Activated CD8-positive, alpha-beta T cell treated with anti-CD3 and anti-CD28 coated beads, Interleukin-2, amount 10 ng/mL, durations not matched to agents 7 days and 5 days (primary cell): ENCODE measurements at regions of chr11 and their contacts with region 1.

Region 1: DNA sequence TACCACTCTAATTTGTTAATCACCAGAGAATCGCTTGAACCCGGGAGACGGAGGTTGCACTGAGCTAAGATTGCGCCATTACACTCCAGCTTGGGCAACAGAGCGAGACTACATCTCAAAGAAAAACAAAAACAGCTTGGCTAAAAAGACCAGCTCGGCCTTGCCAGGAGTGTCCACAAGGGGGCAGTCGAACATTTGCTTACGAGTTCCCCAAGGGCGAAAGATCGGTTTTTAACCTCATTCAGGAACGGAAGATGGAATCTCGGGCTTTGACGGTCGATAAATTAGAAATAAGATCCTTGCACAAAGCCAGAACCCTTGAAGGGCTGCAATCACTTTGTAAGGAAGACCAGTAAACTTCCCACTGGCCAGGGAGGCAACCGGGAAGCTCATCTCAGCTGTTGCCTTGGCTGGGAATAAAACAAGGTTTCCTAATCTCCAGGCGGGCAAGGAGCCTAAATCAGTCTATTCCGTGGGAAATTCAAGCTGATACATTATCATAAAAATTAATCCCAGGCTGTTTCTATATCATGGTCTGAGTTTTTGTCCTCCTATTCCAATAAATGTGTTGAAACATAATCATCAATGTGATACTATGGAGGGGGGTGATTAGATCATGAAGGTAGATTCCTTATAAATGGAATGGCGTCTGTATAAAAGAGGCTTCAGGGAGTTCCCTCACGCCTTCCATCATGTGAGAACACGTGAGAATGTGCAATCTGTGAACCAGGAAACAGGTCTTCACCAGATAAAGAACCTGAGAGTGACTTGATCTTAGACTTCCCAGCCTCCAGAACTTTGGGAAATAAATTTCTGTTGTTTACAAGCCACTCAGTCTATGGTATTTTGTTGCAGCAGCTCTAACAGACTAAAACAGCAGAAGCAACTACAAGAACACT is 14.9 kb upstream of the SLC29A2 start:
- DNase-seq: peak; percentile 91
- ATAC-seq: peak; percentile 71
- H3K4me3 Mint-ChIP-seq: peak overlapping the region; percentile 20
- H3K27ac Mint-ChIP-seq: no peak overlapping the region
- H3K4me1 Mint-ChIP-seq: peaks cover 11% of the 10 kb centered on the region
- H3K27me3 Mint-ChIP-seq: no peaks in the 10 kb centered on the region

Region 2: GRCh38 chr11:66268283-66268951 is 118.0 kb before region 1 on chr11 and contains the start of gene RAB1B:
- CTCF ChIA-PET with region 1: no interaction called
- POLR2A ChIA-PET with region 1: no interaction called
- DNase-seq: peak; percentile 100
- ATAC-seq: peak; percentile 86
- H3K4me3 Mint-ChIP-seq: peak within 1 kb of the TSS; percentile 84
- H3K27ac Mint-ChIP-seq: peak within 1 kb of the TSS; percentile 98
- H3K4me1 Mint-ChIP-seq: peaks cover 50% of the 10 kb centered on the region
- H3K27me3 Mint-ChIP-seq: no peaks in the 10 kb centered on the region
- total RNA-seq, gene RAB1B: 160 to 170 TPM

Region 3: GRCh38 chr11:66336234-66337102 is 50.0 kb before region 1 on chr11 and contains the start of gene RIN1:
- CTCF ChIA-PET with region 1: interaction called, 12 read pairs
- POLR2A ChIA-PET with region 1: no interaction called
- DNase-seq: peak; percentile 82
- ATAC-seq: peak; percentile 80
- H3K4me3 Mint-ChIP-seq: peak within 1 kb of the TSS; percentile 50
- H3K27ac Mint-ChIP-seq: peak within 1 kb of the TSS; percentile 80
- H3K4me1 Mint-ChIP-seq: peaks cover 40% of the 10 kb centered on the region
- H3K27me3 Mint-ChIP-seq: no peaks in the 10 kb centered on the region
- total RNA-seq, gene RIN1: 1.3 TPM

Region 4: DNA sequence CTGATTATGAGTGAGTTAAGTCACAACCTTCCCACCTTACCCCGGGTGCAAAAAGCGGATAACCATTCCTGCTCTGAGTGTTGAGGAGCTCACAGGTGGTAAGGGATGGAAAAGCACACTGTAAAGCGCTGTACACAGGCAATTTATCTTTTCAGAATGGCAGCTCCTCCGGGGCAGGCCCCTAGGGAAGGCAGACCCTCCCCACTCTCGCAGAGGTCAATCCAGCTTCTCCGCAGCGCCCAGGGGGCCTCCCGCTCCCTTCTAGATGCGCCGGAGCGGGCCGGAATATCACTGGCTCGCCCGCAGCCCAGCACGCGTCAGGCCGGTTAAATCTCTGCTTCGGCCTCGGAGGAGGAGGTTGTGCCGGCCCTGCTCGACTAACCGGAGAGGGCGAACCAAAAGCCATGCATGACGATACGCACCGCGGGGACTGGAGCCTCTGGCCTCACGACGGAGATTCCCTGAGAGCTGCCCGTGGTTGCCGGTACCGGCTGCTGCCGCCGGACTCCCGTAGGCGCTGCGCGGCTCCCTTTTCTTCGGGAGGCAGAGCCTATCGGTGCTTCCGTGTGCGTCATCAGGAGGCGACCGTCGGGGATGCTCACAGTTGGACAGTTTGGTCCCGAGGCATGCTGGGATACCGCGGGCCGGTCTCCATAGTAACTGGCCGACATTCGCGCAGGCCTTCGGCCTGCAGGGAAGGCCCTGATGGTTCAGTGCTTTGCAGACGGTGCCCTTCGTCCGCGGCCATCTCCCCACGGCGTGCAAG is 41.7 kb before region 1 on chr11 and contains the start of gene BRMS1:
- CTCF ChIA-PET with region 1: interaction called, 33 read pairs
- POLR2A ChIA-PET with region 1: interaction called, 3 read pairs
- DNase-seq: peak; percentile 98
- ATAC-seq: peak; percentile 77
- H3K4me3 Mint-ChIP-seq: peak within 1 kb of the TSS; percentile 96
- H3K27ac Mint-ChIP-seq: peak within 1 kb of the TSS; percentile 93
- H3K4me1 Mint-ChIP-seq: peaks cover 55% of the 10 kb centered on the region
- H3K27me3 Mint-ChIP-seq: peaks cover 2% of the 10 kb centered on the region
- total RNA-seq, gene BRMS1: 53.2 to 57.1 TPM

Region 5: DNA sequence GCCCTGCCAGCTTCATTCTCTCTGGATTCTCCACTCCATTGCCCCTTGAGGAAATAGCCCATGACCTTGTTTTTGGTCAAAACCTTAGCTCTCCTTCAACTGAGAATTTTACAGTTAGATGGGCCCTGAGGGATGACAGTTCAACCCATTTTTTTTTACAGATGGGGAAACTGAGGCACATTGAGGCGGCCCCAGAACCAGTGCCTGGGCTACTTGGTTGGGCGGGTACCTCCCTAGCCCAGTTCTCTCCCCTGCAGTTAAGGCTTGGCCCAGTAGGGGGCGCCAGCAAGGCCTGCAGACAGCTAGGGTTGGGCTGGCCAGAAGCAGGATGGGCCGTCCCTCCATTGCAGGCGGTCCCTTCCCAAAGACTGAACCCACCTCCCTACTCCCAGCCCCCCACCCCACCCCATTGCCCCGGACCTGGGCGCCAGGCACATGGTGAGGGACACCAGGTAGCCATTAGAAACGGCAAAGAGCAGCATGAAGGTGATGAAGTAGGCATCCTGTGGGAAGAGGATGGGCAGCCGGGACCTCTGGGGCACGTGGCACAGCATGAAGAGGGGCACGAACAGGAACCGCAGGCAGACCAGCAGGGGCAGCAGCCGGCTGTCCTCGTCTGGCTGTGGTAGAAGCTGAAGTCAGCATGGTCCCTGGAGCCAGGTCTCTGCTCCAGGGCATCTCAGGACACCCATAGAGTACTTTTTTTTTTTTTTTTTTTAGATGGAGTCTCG is 22.4 kb before region 1 on chr11:
- CTCF ChIA-PET with region 1: interaction called, 22 read pairs
- POLR2A ChIA-PET with region 1: interaction called, 3 read pairs
- DNase-seq: peak; percentile 80
- ATAC-seq: peak; percentile 78
- H3K4me3 Mint-ChIP-seq: no peak overlapping the region
- H3K27ac Mint-ChIP-seq: no peak overlapping the region
- H3K4me1 Mint-ChIP-seq: no peaks in the 10 kb centered on the region
- H3K27me3 Mint-ChIP-seq: no peaks in the 10 kb centered on the region

Region 6: DNA sequence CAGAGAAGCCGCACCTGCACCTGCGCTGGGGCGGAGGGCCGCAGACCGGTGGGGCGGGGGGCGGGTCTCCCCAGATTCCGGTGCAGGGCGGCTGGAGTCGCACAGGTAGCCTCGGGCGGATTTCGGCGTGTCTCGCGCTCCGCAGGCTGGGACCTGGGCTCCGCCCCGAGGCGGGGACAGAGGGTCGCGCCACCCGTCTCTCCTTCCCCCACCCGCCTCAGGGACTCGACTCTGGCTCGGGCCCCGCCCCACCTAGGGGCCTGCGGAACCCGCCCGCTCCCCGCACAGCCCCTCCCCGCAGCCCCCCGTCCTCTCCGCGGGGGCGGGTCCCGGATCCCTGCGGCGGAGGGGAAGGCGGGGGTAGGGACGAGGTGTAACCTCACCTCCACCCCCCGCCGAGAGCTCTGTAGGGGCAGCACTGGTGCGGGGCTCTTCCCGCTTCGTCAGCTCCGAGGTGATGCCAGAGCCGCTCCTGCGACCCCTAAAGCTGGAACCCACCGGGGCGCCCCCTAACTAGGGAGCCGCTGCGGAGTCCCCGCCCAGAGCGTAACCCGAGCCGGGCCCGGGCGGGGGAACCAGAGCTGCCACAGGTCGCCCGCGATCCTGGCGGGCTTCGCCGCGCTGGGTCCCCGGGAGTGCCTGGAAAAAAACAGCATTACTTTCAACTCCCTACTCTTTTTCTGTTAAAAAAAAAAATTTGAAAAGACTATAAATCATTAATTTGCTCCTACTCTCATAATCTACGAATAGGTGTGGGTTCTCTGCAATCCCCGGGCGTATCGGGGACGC is 14.6 kb before region 1 on chr11 and contains the start of gene SLC29A2:
- CTCF ChIA-PET with region 1: interaction called, 49 read pairs
- POLR2A ChIA-PET with region 1: interaction called, 7 read pairs
- DNase-seq: peak; percentile 91
- ATAC-seq: peak; percentile 87
- H3K4me3 Mint-ChIP-seq: peak within 1 kb of the TSS; percentile 86
- H3K27ac Mint-ChIP-seq: peak within 1 kb of the TSS; percentile 92
- H3K4me1 Mint-ChIP-seq: peaks cover 27% of the 10 kb centered on the region
- H3K27me3 Mint-ChIP-seq: peaks cover 3% of the 10 kb centered on the region
- total RNA-seq, gene SLC29A2: 10.0 to 11.1 TPM

Region 7: GRCh38 chr11:66408488-66409214 is 22.2 kb after region 1 on chr11:
- CTCF ChIA-PET with region 1: interaction called, 14 read pairs
- POLR2A ChIA-PET with region 1: no interaction called
- DNase-seq: peak; percentile 93
- ATAC-seq: peak; percentile 88
- H3K4me3 Mint-ChIP-seq: peak overlapping the region; percentile 73
- H3K27ac Mint-ChIP-seq: peak overlapping the region; percentile 74
- H3K4me1 Mint-ChIP-seq: peaks cover 6% of the 10 kb centered on the region
- H3K27me3 Mint-ChIP-seq: peaks cover 13% of the 10 kb centered on the region